Pancreas (tissue), 10 donors: ENCODE measurements at regions of chr1 and their contacts with region 1.

Region 1: GRCh38 chr1:37317870-37318467 is 156.4 kb upstream of the ZC3H12A start:
- DNase-seq: no peak
- ATAC-seq: peak in 1 of 4 donors; percentile 27
- H3K4me3 ChIP-seq: no peak overlapping the region
- H3K27ac ChIP-seq: no peak overlapping the region
- H3K4me1 ChIP-seq: no peaks in the 10 kb centered on the region
- H3K27me3 ChIP-seq: peaks cover 0 to 22% (median 0%) of the 10 kb centered on the region in 4 donors
- CTCF ChIP-seq: no peak

Region 2: DNA sequence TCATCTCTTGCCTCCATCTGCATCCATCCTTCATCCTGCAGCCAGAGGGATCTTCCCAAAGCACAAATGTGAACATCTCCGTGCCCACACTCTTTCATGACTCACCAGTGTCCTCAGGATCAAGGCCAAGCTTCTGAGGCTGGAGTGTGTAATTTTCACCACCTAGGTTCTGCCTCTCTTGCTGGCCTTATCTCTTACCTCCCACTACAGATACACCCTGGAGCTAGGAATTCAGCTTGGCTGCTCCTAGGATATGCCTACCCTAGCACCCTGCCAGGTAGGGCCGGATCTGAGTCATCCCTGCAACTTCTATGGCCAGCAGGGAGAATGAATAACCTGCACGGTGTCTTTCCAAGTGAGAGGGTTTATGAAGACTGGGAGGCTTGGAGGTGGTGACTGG is 626.6 kb before region 1 on chr1:
- intact Hi-C with region 1: loop called in 1 of 3 experiments (anchors 10 kb)
- DNase-seq: no peak
- ATAC-seq: no peak
- H3K4me3 ChIP-seq: no peak overlapping the region
- H3K27ac ChIP-seq: no peak overlapping the region
- H3K4me1 ChIP-seq: no peaks in the 10 kb centered on the region
- H3K27me3 ChIP-seq: no peaks in the 10 kb centered on the region
- CTCF ChIP-seq: no peak